ENCODE measurements at regions of chr3 and their contacts with region 1.

Region 1: DNA sequence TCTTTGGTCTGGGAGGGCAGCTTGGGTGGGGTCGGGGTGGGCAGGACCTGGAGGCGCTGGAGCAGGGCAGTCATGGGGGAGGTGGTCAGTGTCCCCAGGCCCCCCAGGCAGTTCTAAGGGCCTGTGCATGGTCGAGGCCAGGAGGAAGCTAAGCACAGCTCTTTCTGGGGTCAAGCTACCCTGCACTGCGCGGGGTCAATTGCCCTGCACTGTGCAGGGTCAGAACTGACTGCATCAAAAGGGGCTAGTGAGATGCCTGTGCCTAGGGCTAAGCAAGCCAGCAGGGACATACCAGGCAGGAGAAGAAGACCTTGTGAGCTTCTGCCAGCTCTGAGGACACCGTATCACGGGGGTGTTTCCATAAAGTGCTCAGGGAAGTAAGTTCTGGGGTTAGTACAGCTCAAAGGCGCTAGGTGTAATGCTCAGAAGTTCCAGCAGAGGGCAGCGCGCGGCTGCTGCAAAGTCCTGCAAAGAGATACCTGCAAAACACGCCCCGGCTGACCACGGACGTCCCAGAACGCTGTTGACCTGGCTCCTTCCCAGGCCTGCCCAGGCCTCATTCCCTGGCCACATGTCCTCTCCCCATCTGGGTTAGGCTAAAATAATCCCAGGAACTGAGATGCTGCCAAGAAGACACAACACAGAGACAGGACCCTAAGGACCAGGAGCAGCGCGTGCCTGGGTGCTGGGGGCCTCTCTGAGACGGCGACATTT is 18.8 kb upstream of the IQSEC1 start:
- DNase-seq: peak; percentile 92
- ATAC-seq: peak; percentile 84
- H3K4me3 Mint-ChIP-seq: no peak overlapping the region
- H3K27ac Mint-ChIP-seq: no peak overlapping the region
- H3K4me1 Mint-ChIP-seq: peaks cover 21% of the 10 kb centered on the region
- H3K27me3 Mint-ChIP-seq: no peaks in the 10 kb centered on the region
- CTCF ChIP-seq: peak; percentile 99

Region 2: DNA sequence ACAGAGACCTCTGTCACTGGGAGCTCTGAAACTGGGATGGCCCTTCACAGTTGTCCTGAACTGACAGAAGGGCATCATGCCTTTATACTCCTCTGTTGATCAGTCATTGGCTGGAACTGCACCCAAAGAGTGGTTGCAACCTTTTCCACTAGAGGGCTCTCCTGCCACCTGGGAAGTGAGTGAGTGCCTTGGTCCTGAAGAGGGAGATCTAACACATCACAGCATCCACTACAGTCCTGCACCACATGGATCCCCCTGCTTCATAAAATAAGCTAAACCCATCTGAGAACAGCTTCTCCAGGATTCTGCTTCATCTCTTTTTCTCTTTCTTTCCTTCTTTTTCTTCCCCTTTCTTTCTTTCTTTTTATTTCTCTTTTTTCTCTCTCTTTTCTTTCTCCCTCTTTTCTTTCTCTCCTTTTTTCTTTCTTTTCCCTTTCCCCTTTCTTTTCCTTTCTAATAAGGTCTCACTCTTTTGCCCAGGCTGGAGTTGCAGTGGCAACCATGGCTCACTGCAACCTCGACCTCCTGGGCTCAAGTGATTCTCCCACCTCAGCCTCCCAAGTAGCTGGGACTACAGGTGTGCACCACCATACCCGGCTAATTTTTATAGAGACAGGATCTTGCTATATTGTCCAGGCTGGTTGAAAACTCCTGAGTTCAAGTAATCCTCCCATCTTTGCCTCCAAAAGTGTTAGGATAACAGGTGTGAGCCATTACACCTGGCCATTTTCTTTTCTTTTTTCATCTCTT is 385.4 kb before region 1 on chr3:
- CTCF ChIA-PET with region 1: no interaction called
- POLR2A ChIA-PET with region 1: no interaction called
- DNase-seq: peak; percentile 78
- ATAC-seq: peak; percentile 99
- H3K4me3 Mint-ChIP-seq: no peak overlapping the region
- H3K27ac Mint-ChIP-seq: no peak overlapping the region
- H3K4me1 Mint-ChIP-seq: no peaks in the 10 kb centered on the region
- H3K27me3 Mint-ChIP-seq: no peaks in the 10 kb centered on the region
- CTCF ChIP-seq: peak; percentile 44; the same call in 1 of the 2 replicates

Region 3: DNA sequence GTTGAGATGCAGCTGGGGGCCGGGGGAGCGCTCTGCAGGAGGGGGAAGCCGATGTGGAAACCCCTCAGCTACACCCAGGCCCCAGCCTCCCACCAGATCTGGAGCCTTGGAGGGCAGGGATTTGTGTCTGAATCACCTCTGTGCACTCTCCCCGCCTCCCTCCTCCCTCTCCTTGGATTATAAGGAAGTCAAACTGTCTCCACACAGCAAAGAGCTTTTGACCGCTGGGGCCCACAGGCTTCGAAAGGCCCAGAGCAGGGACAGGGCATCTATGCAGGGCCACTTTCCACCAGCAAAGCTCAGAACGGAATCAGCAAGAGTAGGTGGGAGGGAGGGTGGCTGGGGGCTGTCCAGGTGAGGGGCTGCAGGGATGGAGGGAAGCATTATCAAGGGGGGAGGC is 87.7 kb before region 1 on chr3:
- CTCF ChIA-PET with region 1: interaction called, 18 read pairs
- POLR2A ChIA-PET with region 1: no interaction called
- DNase-seq: no peak
- ATAC-seq: peak; percentile 56; the same call in 1 of the 2 replicates
- H3K4me3 Mint-ChIP-seq: no peak overlapping the region
- H3K27ac Mint-ChIP-seq: no peak overlapping the region
- H3K4me1 Mint-ChIP-seq: peaks cover 28% of the 10 kb centered on the region
- H3K27me3 Mint-ChIP-seq: 0 out of 2 replicates have a peak, but pooled peaks cover 3% of the 10 kb centered on the region
- CTCF ChIP-seq: no peak

Region 4: GRCh38 chr3:13119471-13120220 is 27.6 kb after region 1 on chr3:
- CTCF ChIA-PET with region 1: interaction called, 13 read pairs
- POLR2A ChIA-PET with region 1: no interaction called
- DNase-seq: no peak
- ATAC-seq: no peak
- H3K4me3 Mint-ChIP-seq: no peak overlapping the region
- H3K27ac Mint-ChIP-seq: no peak overlapping the region
- H3K4me1 Mint-ChIP-seq: peaks cover 12% of the 10 kb centered on the region
- H3K27me3 Mint-ChIP-seq: no peaks in the 10 kb centered on the region
- CTCF ChIP-seq: no peak

Region 5: DNA sequence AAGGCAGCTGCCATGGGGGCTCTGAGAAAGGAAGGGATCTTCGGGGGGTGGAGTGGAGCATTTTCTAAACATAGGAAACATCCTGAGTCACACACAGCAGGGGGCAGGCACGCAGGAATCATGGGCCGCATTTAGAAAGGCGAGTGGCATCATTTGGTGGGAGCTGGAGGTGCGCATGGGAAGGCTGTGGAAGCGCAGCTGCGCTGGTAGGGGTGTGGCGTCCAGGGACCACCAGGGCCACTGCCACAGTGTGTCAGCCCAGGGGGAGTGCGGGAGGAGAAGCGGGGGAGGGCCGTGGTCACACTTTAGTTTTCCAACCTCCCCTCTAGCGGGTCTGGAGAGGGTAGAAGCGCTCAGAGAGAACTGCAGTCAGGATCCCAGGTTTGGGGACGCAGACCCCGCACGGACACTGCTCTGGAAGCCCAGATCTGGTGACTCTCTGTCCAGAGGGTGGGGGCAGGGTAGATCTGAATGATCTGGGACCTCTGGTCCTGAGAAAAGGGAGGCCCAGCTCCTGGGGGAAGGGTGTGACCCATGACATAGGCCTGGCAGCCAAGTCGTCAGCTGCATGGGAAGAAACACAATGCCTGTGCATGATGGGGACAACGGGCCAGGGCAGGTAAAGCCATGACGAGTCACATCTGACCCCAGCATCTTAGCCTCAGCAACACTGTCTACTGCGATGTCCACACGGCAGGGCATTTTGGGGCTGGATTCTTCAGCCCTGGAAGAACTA is 69.1 kb after region 1 on chr3:
- CTCF ChIA-PET with region 1: interaction called, 20 read pairs
- POLR2A ChIA-PET with region 1: no interaction called
- DNase-seq: no peak
- ATAC-seq: no peak
- H3K4me3 Mint-ChIP-seq: no peak overlapping the region
- H3K27ac Mint-ChIP-seq: no peak overlapping the region
- H3K4me1 Mint-ChIP-seq: peaks cover 68% of the 10 kb centered on the region
- H3K27me3 Mint-ChIP-seq: no peaks in the 10 kb centered on the region
- CTCF ChIP-seq: no peak

Region 6: DNA sequence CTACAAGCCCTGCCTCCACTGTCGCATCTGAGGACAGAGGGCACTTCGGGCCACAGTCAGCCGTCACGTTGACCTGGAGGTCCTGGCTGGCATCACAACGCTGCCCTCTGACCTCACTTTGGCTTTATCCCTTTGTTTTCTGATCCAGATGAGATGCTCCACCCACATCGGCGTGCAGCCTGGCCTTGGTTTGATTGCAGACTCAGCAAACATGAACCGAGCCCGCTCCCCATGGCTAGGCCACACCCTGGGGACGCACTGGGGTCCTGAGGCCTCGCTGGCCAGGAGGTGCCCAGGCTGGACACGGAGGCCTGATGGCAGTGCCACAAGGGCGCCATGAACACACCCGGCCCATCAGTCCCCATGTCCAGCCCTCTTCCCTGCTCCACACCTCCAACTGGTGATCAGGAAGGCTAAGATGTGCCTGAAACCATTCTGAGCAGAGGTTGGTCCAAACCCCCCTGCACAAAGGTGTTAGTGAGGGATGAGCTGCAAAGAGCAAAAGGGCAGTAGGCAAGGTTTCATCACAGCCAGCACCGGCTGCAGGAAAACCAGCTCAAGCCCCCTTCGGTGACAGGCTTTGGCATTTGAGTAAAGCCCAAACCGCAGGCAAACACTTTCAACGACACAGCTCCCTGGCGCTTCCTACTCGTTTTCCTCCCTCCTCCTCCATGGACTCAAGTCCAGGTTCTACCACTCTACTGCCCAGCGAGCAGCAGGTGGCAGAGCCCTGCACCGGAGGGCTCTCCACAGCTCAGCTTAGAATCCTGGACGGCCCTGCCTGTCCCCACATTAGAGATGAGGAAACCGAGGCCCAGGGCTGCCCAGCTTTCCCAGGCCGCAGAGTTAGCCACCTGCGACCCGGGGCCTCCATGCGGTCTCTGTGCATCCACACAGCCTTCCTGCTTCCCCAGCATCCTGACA is 162.2 kb after region 1 on chr3:
- CTCF ChIA-PET with region 1: interaction called, 11 read pairs
- POLR2A ChIA-PET with region 1: no interaction called
- DNase-seq: no peak
- ATAC-seq: no peak
- H3K4me3 Mint-ChIP-seq: no peak overlapping the region
- H3K27ac Mint-ChIP-seq: peak overlapping the region; percentile 20; the same call in 1 of the 2 replicates
- H3K4me1 Mint-ChIP-seq: peaks cover 4% of the 10 kb centered on the region; the same call in 1 of the 2 replicates
- H3K27me3 Mint-ChIP-seq: no peaks in the 10 kb centered on the region
- CTCF ChIP-seq: no peak

Region 7: GRCh38 chr3:13479581-13480339 is 387.7 kb after region 1 on chr3 and contains the start of gene HDAC11:
- CTCF ChIA-PET with region 1: interaction called, 31 read pairs
- POLR2A ChIA-PET with region 1: no interaction called
- DNase-seq: peak; percentile 99
- ATAC-seq: peak; percentile 93
- H3K4me3 Mint-ChIP-seq: peak within 1 kb of the TSS; percentile 85
- H3K27ac Mint-ChIP-seq: peak within 1 kb of the TSS; percentile 91
- H3K4me1 Mint-ChIP-seq: peaks cover 33% of the 10 kb centered on the region
- H3K27me3 Mint-ChIP-seq: peaks cover 28% of the 10 kb centered on the region
- CTCF ChIP-seq: no peak
- total RNA-seq, gene HDAC11: 11.5 to 12.5 TPM (median 12.0 TPM) in 3 replicates